HepG2 (cell line): ENCODE measurements at regions of chr5 and their contacts with region 1.

Region 1: GRCh38 chr5:52915176-52915875 is 73.8 kb upstream of the ITGA2 start:
- DNase-seq: peak; percentile 68
- ATAC-seq: peak; percentile 99
- H3K4me3 ChIP-seq: peak overlapping the region; percentile 38 to 62 (median 42); a peak in 4 of 6 replicates
- H3K27ac ChIP-seq: no peak overlapping the region
- H3K4me1 ChIP-seq: no peaks in the 10 kb centered on the region
- H3K27me3 ChIP-seq: no peaks in the 10 kb centered on the region
- CTCF ChIP-seq: peak; percentile 79
- EP300 ChIP-seq: no peak
- POLR2A ChIP-seq: no peak
- RAD21 ChIP-seq: peak; percentile 63; the same call in 1 of the 2 replicates

Region 2: GRCh38 chr5:52693280-52693679 is 222.0 kb before region 1 on chr5:
- CTCF ChIA-PET with region 1: interaction called, 11 read pairs
- POLR2A ChIA-PET with region 1: no interaction called
- in situ Hi-C with region 1: no loop called
- intact Hi-C with region 1: loop called (anchors 1 kb)
- DNase-seq: peak; percentile 30
- ATAC-seq: peak; percentile 83
- H3K4me3 ChIP-seq: no peak overlapping the region
- H3K27ac ChIP-seq: no peak overlapping the region
- H3K4me1 ChIP-seq: no peaks in the 10 kb centered on the region
- H3K27me3 ChIP-seq: peaks cover 0 to 8% of the 10 kb centered on the region in 2 experiments; a peak in 2 of 5 replicates
- CTCF ChIP-seq: peak; percentile 66
- EP300 ChIP-seq: no peak
- POLR2A ChIP-seq: no peak
- RAD21 ChIP-seq: no peak

Region 3: GRCh38 chr5:52867809-52868208 is 47.5 kb before region 1 on chr5:
- CTCF ChIA-PET with region 1: no interaction called
- POLR2A ChIA-PET with region 1: no interaction called
- in situ Hi-C with region 1: no loop called
- intact Hi-C with region 1: loop called (anchors 1 kb)
- DNase-seq: no peak
- ATAC-seq: no peak
- H3K4me3 ChIP-seq: no peak overlapping the region
- H3K27ac ChIP-seq: no peak overlapping the region
- H3K4me1 ChIP-seq: peaks cover 9% of the 10 kb centered on the region
- H3K27me3 ChIP-seq: no peaks in the 10 kb centered on the region
- CTCF ChIP-seq: no peak
- EP300 ChIP-seq: no peak
- POLR2A ChIP-seq: no peak
- RAD21 ChIP-seq: no peak

Region 4: DNA sequence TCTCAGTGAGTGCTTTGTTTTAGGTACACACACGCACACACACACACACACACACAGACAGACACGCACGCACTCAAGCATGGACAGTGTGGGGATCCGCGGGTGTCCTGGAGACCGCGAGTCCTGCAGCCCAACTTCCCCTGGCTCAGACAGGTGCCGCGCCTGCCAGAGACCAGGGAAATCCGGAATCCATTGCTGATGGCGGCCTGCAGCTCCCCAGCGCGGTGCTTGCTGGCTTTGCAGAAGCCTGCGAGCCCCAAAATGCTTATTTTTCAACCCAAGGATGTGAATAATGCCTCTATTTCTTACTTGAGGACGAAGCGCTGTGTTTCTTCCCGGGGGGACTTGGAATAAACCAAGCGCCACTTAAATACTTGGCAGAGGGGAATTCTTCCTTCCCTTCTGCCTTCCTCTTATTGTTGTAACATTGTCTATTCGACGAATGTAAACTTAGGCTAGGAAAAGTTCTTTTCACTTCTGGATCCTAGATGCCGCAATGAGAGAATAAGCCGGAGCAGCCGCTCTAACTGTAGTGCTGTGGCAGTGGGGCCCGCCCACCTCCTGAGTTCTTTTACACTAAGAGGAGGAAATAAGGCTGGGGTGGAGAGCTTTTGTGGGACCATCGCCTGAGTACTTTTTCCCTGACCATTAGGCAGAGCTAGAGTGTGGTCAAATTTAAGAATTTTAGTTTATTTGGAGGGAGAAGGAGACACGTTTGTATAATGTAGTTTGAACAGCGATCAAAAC is 74.6 kb after region 1 on chr5:
- CTCF ChIA-PET with region 1: no interaction called
- POLR2A ChIA-PET with region 1: no interaction called
- in situ Hi-C with region 1: no loop called
- intact Hi-C with region 1: no loop called
- DNase-seq: no peak
- ATAC-seq: peak; percentile 70
- H3K4me3 ChIP-seq: peak overlapping the region; percentile 87 to 91 (median 90)
- H3K27ac ChIP-seq: peak overlapping the region; percentile 70
- H3K4me1 ChIP-seq: peaks cover 64% of the 10 kb centered on the region
- H3K27me3 ChIP-seq: no peaks in the 10 kb centered on the region; a peak in 1 of 5 replicates
- CTCF ChIP-seq: peak; percentile 37
- EP300 ChIP-seq: no peak
- POLR2A ChIP-seq: no peak; a peak in 1 of 4 replicates
- RAD21 ChIP-seq: no peak; the same call in 1 of the 2 replicates